OCI-LY7 (cell line): ENCODE measurements at regions of chr10 and their contacts with region 1.

Region 1: GRCh38 chr10:63629363-63630084 is 108.3 kb downstream of the REEP3 start:
- DNase-seq: peak; percentile 91
- H3K4me3 ChIP-seq: peak overlapping the region; percentile 71
- H3K27ac ChIP-seq: peak overlapping the region; percentile 80
- H3K4me1 ChIP-seq: peaks cover 27% of the 10 kb centered on the region
- CTCF ChIP-seq: peak; percentile 98

Region 2: DNA sequence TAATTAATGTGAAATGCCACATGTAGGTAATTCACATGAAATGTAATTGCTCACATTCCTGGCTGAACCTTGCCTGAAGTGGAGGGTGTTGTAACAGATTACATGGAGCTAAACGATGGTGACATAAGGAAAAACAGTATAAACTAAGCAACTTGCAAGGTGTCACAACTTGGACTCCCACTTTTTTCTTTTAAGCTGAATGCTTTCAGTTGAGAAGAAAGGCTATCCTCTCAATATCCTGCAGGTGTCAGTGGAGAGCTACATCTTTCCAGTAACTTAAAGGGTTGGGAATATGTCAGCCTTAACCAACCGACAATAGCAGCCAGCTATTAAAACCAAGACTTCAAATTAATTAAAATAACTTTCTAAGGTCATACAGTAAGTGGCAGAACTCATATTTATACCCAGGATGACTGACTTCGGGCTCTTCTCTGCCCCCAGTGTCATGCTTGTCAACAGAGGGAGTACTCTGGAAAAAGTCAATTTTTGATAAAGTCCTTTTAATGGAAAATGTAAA is 462.7 kb before region 1 on chr10:
- CTCF ChIA-PET with region 1: interaction called, 12 read pairs
- POLR2A ChIA-PET with region 1: interaction called, 3 read pairs
- intact Hi-C with region 1: loop called (anchors 1 kb)
- DNase-seq: peak; percentile 78
- H3K4me3 ChIP-seq: no peak overlapping the region
- H3K27ac ChIP-seq: no peak overlapping the region
- H3K4me1 ChIP-seq: no peaks in the 10 kb centered on the region
- CTCF ChIP-seq: peak; percentile 94

Region 3: GRCh38 chr10:63217120-63217605 is 412.4 kb before region 1 on chr10:
- CTCF ChIA-PET with region 1: interaction called, 3 read pairs
- POLR2A ChIA-PET with region 1: interaction called, 4 read pairs
- intact Hi-C with region 1: loop called (anchors 1 kb)
- DNase-seq: peak; percentile 73
- H3K4me3 ChIP-seq: no peak overlapping the region
- H3K27ac ChIP-seq: no peak overlapping the region
- H3K4me1 ChIP-seq: peaks cover 44% of the 10 kb centered on the region
- CTCF ChIP-seq: peak; percentile 93

Region 4: GRCh38 chr10:63421591-63421990 is 207.9 kb before region 1 on chr10:
- CTCF ChIA-PET with region 1: no interaction called
- POLR2A ChIA-PET with region 1: no interaction called
- intact Hi-C with region 1: loop called (anchors 2 kb)
- DNase-seq: peak; percentile 66
- H3K4me3 ChIP-seq: no peak overlapping the region
- H3K27ac ChIP-seq: peak overlapping the region; percentile 30
- H3K4me1 ChIP-seq: peaks cover 15% of the 10 kb centered on the region
- CTCF ChIP-seq: no peak

Region 5: GRCh38 chr10:63465293-63466143 is 164.0 kb before region 1 on chr10 and contains the start of gene JMJD1C:
- CTCF ChIA-PET with region 1: no interaction called
- POLR2A ChIA-PET with region 1: no interaction called
- intact Hi-C with region 1: loop called (anchors 2 kb)
- DNase-seq: peak; percentile 61
- H3K4me3 ChIP-seq: peak within 1 kb of the TSS; percentile 73
- H3K27ac ChIP-seq: no peak within 1 kb of the TSS
- H3K4me1 ChIP-seq: peaks cover 7% of the 10 kb centered on the region
- CTCF ChIP-seq: peak; percentile 34; the same call in 1 of the 2 replicates
- total RNA-seq, gene JMJD1C: 99.2 and 104 TPM in 2 replicates

Region 6: DNA sequence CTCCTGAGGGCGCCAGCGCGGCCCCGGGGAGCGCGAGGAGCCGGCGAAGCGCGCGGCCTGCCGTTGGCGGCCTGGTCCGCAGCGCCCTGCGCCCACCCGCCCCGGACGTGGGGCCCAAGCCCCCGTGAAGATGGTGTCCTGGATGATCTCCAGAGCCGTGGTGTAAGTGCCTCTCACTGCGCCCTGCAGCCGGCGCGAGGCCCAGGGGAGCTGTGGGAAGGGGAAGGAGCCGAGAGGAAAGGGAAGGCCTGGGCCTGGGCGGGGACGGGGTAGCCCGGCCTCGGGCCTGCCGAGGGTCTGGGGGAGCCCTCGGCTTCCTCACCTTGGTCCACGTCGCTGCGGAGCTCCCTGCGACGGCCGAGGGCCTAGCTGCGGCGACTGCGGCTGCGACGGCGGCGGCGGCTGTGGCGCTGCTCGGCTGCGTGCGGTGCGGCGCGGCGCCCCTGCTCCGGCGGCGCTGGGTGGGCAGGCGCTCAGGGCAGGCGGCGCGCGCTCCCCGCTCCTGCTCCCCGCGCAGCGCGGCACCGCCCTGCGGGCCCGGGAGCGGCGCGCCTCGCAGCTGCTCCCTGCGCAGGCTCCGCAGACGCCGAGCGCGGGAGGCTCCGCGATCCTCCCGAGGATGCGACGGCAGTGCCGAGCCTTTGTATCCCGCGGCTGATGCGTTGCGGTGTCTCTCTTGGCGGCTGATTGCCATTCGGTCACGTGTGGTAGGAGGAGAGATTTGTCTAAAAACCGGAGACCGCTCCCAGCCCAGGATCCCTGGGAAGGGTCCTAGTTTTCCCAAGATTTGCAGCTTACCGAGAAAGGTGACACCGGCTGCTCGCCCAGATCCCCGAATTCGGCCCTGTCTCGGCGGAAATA is 107.9 kb before region 1 on chr10:
- CTCF ChIA-PET with region 1: no interaction called
- POLR2A ChIA-PET with region 1: interaction called, 6 read pairs
- intact Hi-C with region 1: loop called (anchors 1 kb)
- DNase-seq: peak; percentile 79
- H3K4me3 ChIP-seq: peak overlapping the region; percentile 76
- H3K27ac ChIP-seq: peak overlapping the region; percentile 73
- H3K4me1 ChIP-seq: peaks cover 29% of the 10 kb centered on the region
- CTCF ChIP-seq: no peak

Region 7: GRCh38 chr10:63593576-63593975 is 35.9 kb before region 1 on chr10:
- CTCF ChIA-PET with region 1: no interaction called
- POLR2A ChIA-PET with region 1: no interaction called
- intact Hi-C with region 1: no loop called
- DNase-seq: no peak
- H3K4me3 ChIP-seq: no peak overlapping the region
- H3K27ac ChIP-seq: no peak overlapping the region
- H3K4me1 ChIP-seq: no peaks in the 10 kb centered on the region
- CTCF ChIP-seq: no peak

Region 8: GRCh38 chr10:63720072-63720537 is 90.6 kb after region 1 on chr10:
- CTCF ChIA-PET with region 1: interaction called, 5 read pairs
- POLR2A ChIA-PET with region 1: interaction called, 6 read pairs
- intact Hi-C with region 1: loop called (anchors 2 kb)
- DNase-seq: peak; percentile 72
- H3K4me3 ChIP-seq: no peak overlapping the region
- H3K27ac ChIP-seq: no peak overlapping the region
- H3K4me1 ChIP-seq: no peaks in the 10 kb centered on the region
- CTCF ChIP-seq: peak; percentile 99